ENCODE measurements at regions of chr14 and their contacts with region 1.

Region 1: GRCh38 chr14:74612350-74613021 is 449 bp upstream of the LTBP2 start:
- DNase-seq: peak; percentile 91
- ATAC-seq: peak; percentile 91
- H3K4me3 ChIP-seq: peak overlapping the region; percentile 38 to 82 (median 61)
- H3K4me3 Mint-ChIP-seq: peak overlapping the region; percentile 76
- H3K27ac ChIP-seq: no peak overlapping the region
- H3K27ac Mint-ChIP-seq: peak overlapping the region; percentile 32
- H3K4me1 ChIP-seq: peaks cover 36 to 43% of the 10 kb centered on the region in 2 donors
- H3K4me1 Mint-ChIP-seq: peaks cover 43% of the 10 kb centered on the region
- H3K27me3 ChIP-seq: peaks cover 0 to 18% (median 5%) of the 10 kb centered on the region in 4 experiments
- H3K27me3 Mint-ChIP-seq: peaks cover 16% of the 10 kb centered on the region
- CTCF ChIP-seq: peak; percentile 67

Region 2: GRCh38 chr14:72926292-72927028 is 1686.0 kb before region 1 on chr14 and contains the start of gene DCAF4:
- CTCF ChIA-PET with region 1: no interaction called
- POLR2A ChIA-PET with region 1: no interaction called
- intact Hi-C with region 1: loop called (anchors 5 kb)
- DNase-seq: peak; percentile 97
- ATAC-seq: peak; percentile 91
- H3K4me3 ChIP-seq: peak within 1 kb of the TSS; percentile 55 to 87 (median 70)
- H3K4me3 Mint-ChIP-seq: peak within 1 kb of the TSS; percentile 99
- H3K27ac ChIP-seq: peak within 1 kb of the TSS; percentile 66 to 89
- H3K27ac Mint-ChIP-seq: peak within 1 kb of the TSS; percentile 95
- H3K4me1 ChIP-seq: peaks cover 10 to 23% of the 10 kb centered on the region in 2 donors
- H3K4me1 Mint-ChIP-seq: peaks cover 15% of the 10 kb centered on the region
- H3K27me3 ChIP-seq: no peaks in the 10 kb centered on the region
- H3K27me3 Mint-ChIP-seq: peaks cover 7% of the 10 kb centered on the region
- CTCF ChIP-seq: no peak
- total RNA-seq, gene DCAF4: 35.3 and 36.2 TPM in 2 replicates

Region 3: DNA sequence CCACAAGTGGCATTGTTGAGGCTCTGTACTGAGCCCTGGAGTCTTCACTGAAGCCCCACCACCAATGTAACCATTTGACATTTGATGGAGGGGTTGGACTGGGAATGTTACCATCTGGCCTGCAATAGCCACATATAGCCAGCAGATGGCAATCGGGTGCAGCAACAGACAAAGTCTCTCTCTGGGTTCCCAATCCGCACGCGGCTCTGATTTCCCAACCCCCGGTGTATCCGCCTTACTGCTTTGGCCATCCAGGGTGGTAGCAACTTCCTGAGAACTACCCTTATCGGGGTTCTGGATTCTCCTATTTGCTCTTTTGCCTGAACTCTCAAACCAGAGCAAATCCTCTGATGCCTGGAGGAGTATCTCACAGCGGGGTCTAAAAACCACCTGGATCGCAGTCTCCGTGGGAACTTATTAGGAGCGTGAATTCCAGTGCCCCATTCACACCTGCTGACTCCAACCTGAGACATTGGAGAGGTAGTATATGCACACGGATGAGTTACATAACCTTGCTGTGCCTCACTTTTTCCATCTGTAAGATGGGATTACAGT is 250.0 kb before region 1 on chr14:
- CTCF ChIA-PET with region 1: interaction called, 7 read pairs
- POLR2A ChIA-PET with region 1: no interaction called
- intact Hi-C with region 1: loop called (anchors 1 kb)
- DNase-seq: peak; percentile 79
- ATAC-seq: peak; percentile 88
- H3K4me3 ChIP-seq: no peak overlapping the region
- H3K4me3 Mint-ChIP-seq: no peak overlapping the region
- H3K27ac ChIP-seq: no peak overlapping the region
- H3K27ac Mint-ChIP-seq: no peak overlapping the region
- H3K4me1 ChIP-seq: peaks cover 4 to 5% of the 10 kb centered on the region in 2 donors
- H3K4me1 Mint-ChIP-seq: no peaks in the 10 kb centered on the region
- H3K27me3 ChIP-seq: peaks cover 0 to 3% (median 0%) of the 10 kb centered on the region in 4 experiments
- H3K27me3 Mint-ChIP-seq: peaks cover 6% of the 10 kb centered on the region
- CTCF ChIP-seq: peak; percentile 99

Region 4: GRCh38 chr14:74425525-74426201 is 186.8 kb before region 1 on chr14:
- CTCF ChIA-PET with region 1: no interaction called
- POLR2A ChIA-PET with region 1: no interaction called
- intact Hi-C with region 1: no loop called
- DNase-seq: peak; percentile 70
- ATAC-seq: peak; percentile 78
- H3K4me3 ChIP-seq: no peak overlapping the region
- H3K4me3 Mint-ChIP-seq: no peak overlapping the region
- H3K27ac ChIP-seq: no peak overlapping the region
- H3K27ac Mint-ChIP-seq: no peak overlapping the region
- H3K4me1 ChIP-seq: peaks cover 0 to 3% of the 10 kb centered on the region in 2 donors
- H3K4me1 Mint-ChIP-seq: peaks cover 2% of the 10 kb centered on the region
- H3K27me3 ChIP-seq: peaks cover 0 to 33% (median 19%) of the 10 kb centered on the region in 4 experiments
- H3K27me3 Mint-ChIP-seq: peaks cover 58% of the 10 kb centered on the region
- CTCF ChIP-seq: no peak

Region 5: GRCh38 chr14:74592476-74593201 is 19.8 kb before region 1 on chr14:
- CTCF ChIA-PET with region 1: interaction called, 11 read pairs
- POLR2A ChIA-PET with region 1: interaction called, 3 read pairs
- intact Hi-C with region 1: no loop called
- DNase-seq: peak; percentile 75
- ATAC-seq: peak; percentile 82
- H3K4me3 ChIP-seq: peak overlapping the region in 1 of 5 experiments; percentile 25
- H3K4me3 Mint-ChIP-seq: peak overlapping the region; percentile 44
- H3K27ac ChIP-seq: peak overlapping the region; percentile 58 to 78
- H3K27ac Mint-ChIP-seq: peak overlapping the region; percentile 54
- H3K4me1 ChIP-seq: peaks cover 25 to 29% of the 10 kb centered on the region in 2 donors
- H3K4me1 Mint-ChIP-seq: peaks cover 24% of the 10 kb centered on the region
- H3K27me3 ChIP-seq: no peaks in the 10 kb centered on the region
- H3K27me3 Mint-ChIP-seq: no peaks in the 10 kb centered on the region
- CTCF ChIP-seq: no peak

Region 6: DNA sequence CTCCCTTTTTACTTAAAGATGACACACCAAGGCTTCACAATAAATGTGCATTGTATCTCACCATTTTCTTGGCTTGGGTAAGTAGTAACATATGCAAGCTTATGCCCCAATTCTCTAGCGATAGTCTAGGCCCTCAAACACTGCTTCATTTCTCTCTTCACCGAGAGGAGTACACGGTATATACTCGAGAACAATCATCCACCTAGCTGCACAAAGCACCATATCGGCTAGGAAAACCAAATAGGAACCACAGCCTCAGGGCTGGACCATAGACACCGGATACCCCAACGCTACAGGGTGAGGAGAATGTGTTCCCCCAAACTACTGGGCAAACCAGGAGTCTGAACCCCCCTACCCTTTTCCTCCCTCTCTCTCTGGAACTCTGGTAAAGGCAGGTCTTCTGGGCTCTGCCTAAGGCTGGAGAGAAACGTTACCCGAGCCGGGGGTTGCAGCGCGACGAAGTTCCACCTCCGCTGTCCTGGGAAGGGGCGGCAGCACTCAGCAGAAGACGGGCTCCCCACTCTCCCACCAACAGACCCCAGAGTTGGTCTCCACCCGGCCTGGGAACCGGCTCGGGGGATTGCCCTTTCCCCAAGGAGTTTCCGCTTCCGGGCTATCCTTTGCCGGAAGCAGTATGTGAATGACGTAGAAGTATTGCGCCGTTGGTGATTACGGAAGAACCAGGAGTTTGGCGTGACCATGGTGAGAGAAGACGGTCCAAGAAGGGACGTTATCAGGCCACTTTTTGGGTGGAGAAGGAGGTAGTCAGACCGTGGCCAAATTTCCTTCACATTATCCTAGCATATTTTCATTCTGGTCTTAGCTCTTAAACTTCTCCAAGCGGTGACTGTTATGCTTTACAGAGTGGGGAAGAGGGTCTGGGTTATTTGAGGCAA is 100.3 kb after region 1 on chr14 and contains the starts of genes AREL1 and FCF1:
- CTCF ChIA-PET with region 1: interaction called, 4 read pairs
- POLR2A ChIA-PET with region 1: no interaction called
- intact Hi-C with region 1: loop called (anchors 1 kb)
- DNase-seq: peak; percentile 91
- ATAC-seq: peak; percentile 94
- H3K4me3 ChIP-seq: peak within 1 kb of the TSS; percentile 64 to 97 (median 87)
- H3K4me3 Mint-ChIP-seq: peak within 1 kb of the TSS; percentile 88
- H3K27ac ChIP-seq: peak within 1 kb of the TSS; percentile 83 to 90
- H3K27ac Mint-ChIP-seq: peak within 1 kb of the TSS; percentile 85
- H3K4me1 ChIP-seq: peaks cover 18 to 20% of the 10 kb centered on the region in 2 donors
- H3K4me1 Mint-ChIP-seq: peaks cover 38% of the 10 kb centered on the region
- H3K27me3 ChIP-seq: no peaks in the 10 kb centered on the region
- H3K27me3 Mint-ChIP-seq: no peaks in the 10 kb centered on the region
- CTCF ChIP-seq: no peak
- total RNA-seq, gene AREL1: 39.4 and 44.4 TPM in 2 replicates
- total RNA-seq, gene FCF1: 40.6 and 41.6 TPM in 2 replicates

Region 7: DNA sequence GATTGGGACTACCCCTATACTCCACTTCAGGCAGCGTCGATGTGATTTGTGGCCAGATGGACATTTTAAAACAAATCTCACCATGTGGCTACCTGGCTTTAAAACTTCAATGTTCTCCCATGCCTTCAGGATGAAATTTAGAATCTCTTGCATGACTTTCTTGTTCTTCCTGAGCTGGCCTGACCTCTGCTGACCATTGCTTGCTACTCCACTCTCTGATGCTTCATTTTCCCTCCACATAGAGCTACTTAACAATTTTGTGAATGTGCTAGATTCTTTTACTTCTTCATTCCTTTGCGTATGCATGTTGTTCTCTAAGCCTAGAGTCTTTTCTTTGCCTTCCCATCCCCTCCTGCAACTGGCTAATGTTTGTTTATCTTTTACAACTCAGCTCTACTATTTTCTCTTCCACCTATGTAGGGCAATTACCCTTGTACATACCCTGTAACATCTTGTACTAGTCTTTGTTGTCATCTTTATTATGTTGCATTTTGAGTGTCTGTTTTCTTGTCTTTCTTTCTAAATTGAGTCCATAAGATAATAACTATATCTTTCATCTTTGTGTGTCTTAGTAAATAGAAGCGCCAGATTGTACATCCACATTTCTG is 191.8 kb after region 1 on chr14:
- CTCF ChIA-PET with region 1: interaction called, 34 read pairs
- POLR2A ChIA-PET with region 1: interaction called, 3 read pairs
- intact Hi-C with region 1: no loop called
- DNase-seq: peak; percentile 33
- ATAC-seq: no peak
- H3K4me3 ChIP-seq: no peak overlapping the region
- H3K4me3 Mint-ChIP-seq: no peak overlapping the region
- H3K27ac ChIP-seq: no peak overlapping the region
- H3K27ac Mint-ChIP-seq: no peak overlapping the region
- H3K4me1 ChIP-seq: no peaks in the 10 kb centered on the region
- H3K4me1 Mint-ChIP-seq: no peaks in the 10 kb centered on the region
- H3K27me3 ChIP-seq: no peaks in the 10 kb centered on the region
- H3K27me3 Mint-ChIP-seq: no peaks in the 10 kb centered on the region
- CTCF ChIP-seq: peak; percentile 58

Region 8: GRCh38 chr14:75063407-75064213 is 451.1 kb after region 1 on chr14 and contains the start of gene ACYP1:
- CTCF ChIA-PET with region 1: no interaction called
- POLR2A ChIA-PET with region 1: no interaction called
- intact Hi-C with region 1: loop called (anchors 10 kb)
- DNase-seq: peak; percentile 91
- ATAC-seq: peak; percentile 99
- H3K4me3 ChIP-seq: peak within 1 kb of the TSS; percentile 72 to 100 (median 96)
- H3K4me3 Mint-ChIP-seq: peak within 1 kb of the TSS; percentile 100
- H3K27ac ChIP-seq: peak within 1 kb of the TSS; percentile 65 to 73
- H3K27ac Mint-ChIP-seq: peak within 1 kb of the TSS; percentile 95
- H3K4me1 ChIP-seq: peaks cover 12 to 16% of the 10 kb centered on the region in 2 donors
- H3K4me1 Mint-ChIP-seq: peaks cover 20% of the 10 kb centered on the region
- H3K27me3 ChIP-seq: no peaks in the 10 kb centered on the region
- H3K27me3 Mint-ChIP-seq: no peaks in the 10 kb centered on the region
- CTCF ChIP-seq: no peak
- total RNA-seq, gene ACYP1: 34.1 and 46.7 TPM in 2 replicates

Measured in B cell (primary cell).